Activated B cell treated with CpG ODN at 0.5 μM for 24 hours (primary cell): ENCODE measurements at regions of chr10 and their contacts with region 1.

Region 1: DNA sequence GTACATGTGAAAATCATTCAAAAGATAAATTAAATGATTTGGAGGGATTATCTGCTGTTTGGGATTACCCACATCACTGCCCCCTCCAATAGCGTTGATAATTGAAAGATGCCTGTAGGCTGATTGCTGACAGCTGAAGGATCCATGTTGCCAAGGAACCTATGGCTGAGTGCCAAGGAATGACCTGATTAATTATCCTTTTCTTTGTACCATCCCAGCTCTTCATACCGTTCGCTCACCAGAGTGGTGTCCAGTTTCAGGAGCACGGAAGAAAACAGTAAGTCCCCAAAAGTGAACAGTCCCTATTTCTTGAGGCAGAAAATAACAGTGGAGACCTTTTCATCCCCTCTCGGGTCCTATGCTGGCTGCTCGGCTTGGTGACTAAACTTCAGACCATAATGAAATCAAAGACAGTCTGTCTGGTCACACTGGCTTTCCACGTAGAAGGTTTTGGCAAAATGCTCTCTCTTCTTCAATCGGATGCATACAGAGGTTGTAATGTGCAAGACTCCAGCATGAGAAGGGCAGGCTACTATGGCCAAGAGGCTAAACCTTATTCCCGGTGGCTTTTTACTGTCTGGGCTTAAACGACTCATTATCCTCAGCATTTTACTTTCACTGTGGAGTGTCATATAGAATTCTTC is 108.8 kb downstream of the SPAG6 start:
- DNase-seq: no peak
- ATAC-seq: no peak
- H3K4me3 Mint-ChIP-seq: no peak overlapping the region
- H3K27ac Mint-ChIP-seq: peak overlapping the region; percentile 30
- H3K4me1 Mint-ChIP-seq: peaks cover 29% of the 10 kb centered on the region
- H3K27me3 Mint-ChIP-seq: no peaks in the 10 kb centered on the region
- CTCF ChIP-seq: no peak

Region 2: GRCh38 chr10:22443175-22443901 is 10.7 kb before region 1 on chr10:
- CTCF ChIA-PET with region 1: no interaction called
- POLR2A ChIA-PET with region 1: interaction called, 86 read pairs
- intact Hi-C with region 1: loop called (anchors 1 kb)
- DNase-seq: no peak
- ATAC-seq: peak; percentile 31
- H3K4me3 Mint-ChIP-seq: no peak overlapping the region
- H3K27ac Mint-ChIP-seq: peak overlapping the region; percentile 12
- H3K4me1 Mint-ChIP-seq: peaks cover 37% of the 10 kb centered on the region
- H3K27me3 Mint-ChIP-seq: no peaks in the 10 kb centered on the region
- CTCF ChIP-seq: no peak